Esophagus muscularis mucosa (tissue), 4 donors: ENCODE measurements at regions of chr4 and their contacts with region 1.

Region 1: DNA sequence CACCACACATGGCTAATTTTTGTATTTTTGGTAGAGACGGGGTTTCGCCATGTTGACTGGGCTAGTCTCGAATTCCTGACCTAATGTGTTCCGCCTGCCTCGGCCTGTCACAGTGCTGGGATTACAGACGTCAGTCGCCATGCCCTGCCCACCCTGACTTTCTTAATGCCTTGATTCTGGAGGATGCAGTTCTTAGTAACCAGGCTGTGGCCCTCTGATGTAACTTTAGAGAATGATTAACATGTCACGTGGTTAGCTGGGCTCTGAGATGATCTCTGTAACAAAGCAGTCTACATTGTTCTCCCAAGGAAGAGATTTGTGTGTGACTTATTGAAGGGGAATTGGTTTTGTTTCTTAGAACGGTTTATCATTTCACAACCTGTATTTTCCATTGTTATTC is 30.6 kb downstream of the ANK2 start:
- DNase-seq: no peak
- H3K4me3 ChIP-seq: no peak overlapping the region
- H3K27ac ChIP-seq: no peak overlapping the region
- H3K4me1 ChIP-seq: no peaks in the 10 kb centered on the region
- H3K27me3 ChIP-seq: no peaks in the 10 kb centered on the region
- CTCF ChIP-seq: no peak
- EP300 ChIP-seq: no peak
- POLR2A ChIP-seq: no peak

Region 2: GRCh38 chr4:112951362-112952312 is 128.4 kb before region 1 on chr4:
- intact Hi-C with region 1: loop called (anchors 10 kb)
- DNase-seq: no peak
- H3K4me3 ChIP-seq: peak overlapping the region in 3 of 4 donors; percentile 2 to 12 (median 5)
- H3K27ac ChIP-seq: no peak overlapping the region
- H3K4me1 ChIP-seq: peaks cover 0 to 6% (median 0%) of the 10 kb centered on the region in 4 donors
- H3K27me3 ChIP-seq: no peaks in the 10 kb centered on the region
- CTCF ChIP-seq: peak; percentile 37 to 69 (median 56)
- EP300 ChIP-seq: no peak
- POLR2A ChIP-seq: no peak